ENCODE measurements at regions of chr20 and their contacts with region 1.

Region 1: DNA sequence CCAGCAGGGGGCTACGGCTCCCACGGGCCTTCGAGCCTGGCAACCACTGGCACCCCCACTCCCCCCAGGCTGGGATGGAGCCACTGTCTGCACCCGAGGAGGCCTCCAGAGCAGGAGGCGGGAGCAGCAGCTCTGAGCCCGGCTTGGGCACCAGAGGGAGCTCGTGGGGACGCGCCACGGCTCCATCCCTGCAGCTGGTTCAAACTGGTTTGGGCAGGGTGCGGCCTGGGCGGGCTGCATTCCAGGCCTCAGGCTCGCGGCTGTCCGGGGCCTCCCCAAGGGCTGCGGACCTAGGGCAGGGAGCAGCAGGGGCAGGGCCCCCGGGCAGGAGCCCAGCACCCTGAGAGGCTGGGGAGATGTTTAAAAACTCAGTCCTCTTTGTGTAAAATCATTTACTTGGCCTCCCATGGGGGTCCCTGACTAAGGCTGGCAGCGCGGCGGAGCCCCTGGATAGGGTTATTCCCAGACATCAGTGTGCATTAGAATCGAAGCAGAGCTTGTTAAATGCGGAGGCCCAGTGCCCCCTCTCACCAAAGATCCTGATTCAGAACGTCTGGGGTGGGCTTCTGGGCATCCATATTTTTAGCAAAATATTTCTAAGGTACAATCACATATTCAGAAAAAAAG is 4.1 kb upstream of the BCAS4 start:
- DNase-seq: peak; percentile 93
- ATAC-seq: peak; percentile 86
- H3K4me3 Mint-ChIP-seq: no peak overlapping the region
- H3K27ac Mint-ChIP-seq: peak overlapping the region; percentile 75
- H3K4me1 Mint-ChIP-seq: peaks cover 12% of the 10 kb centered on the region
- H3K27me3 Mint-ChIP-seq: no peaks in the 10 kb centered on the region

Region 2: DNA sequence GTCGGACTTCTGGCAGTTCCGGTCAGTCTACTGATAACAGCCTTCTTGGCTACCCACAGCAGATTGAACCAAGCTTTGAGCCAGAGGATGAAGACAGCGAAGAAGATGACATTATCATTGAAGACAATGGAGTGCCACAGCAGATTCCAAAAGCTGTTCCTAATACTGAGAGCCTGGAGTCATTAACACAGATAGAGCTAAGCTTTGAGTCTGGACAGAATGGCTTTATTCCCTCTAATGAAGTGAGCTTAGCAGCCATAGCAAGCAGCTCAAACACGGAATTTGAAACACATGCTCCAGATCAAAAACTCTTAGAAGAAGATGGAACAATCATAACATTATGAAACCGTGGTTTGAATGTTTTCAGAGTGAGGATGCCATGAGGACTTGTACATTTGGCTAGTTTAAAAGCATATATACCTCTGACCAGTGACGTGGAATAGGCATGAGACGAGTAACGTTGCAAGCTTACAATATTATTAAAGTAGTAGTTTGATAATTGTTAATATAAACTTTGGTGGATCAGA is 40.6 kb before region 1 on chr20:
- CTCF ChIA-PET with region 1: interaction called, 20 read pairs
- POLR2A ChIA-PET with region 1: no interaction called
- intact Hi-C with region 1: no loop called
- DNase-seq: no peak
- ATAC-seq: no peak
- H3K4me3 Mint-ChIP-seq: no peak overlapping the region
- H3K27ac Mint-ChIP-seq: no peak overlapping the region
- H3K4me1 Mint-ChIP-seq: peaks cover 29% of the 10 kb centered on the region
- H3K27me3 Mint-ChIP-seq: no peaks in the 10 kb centered on the region

Region 3: DNA sequence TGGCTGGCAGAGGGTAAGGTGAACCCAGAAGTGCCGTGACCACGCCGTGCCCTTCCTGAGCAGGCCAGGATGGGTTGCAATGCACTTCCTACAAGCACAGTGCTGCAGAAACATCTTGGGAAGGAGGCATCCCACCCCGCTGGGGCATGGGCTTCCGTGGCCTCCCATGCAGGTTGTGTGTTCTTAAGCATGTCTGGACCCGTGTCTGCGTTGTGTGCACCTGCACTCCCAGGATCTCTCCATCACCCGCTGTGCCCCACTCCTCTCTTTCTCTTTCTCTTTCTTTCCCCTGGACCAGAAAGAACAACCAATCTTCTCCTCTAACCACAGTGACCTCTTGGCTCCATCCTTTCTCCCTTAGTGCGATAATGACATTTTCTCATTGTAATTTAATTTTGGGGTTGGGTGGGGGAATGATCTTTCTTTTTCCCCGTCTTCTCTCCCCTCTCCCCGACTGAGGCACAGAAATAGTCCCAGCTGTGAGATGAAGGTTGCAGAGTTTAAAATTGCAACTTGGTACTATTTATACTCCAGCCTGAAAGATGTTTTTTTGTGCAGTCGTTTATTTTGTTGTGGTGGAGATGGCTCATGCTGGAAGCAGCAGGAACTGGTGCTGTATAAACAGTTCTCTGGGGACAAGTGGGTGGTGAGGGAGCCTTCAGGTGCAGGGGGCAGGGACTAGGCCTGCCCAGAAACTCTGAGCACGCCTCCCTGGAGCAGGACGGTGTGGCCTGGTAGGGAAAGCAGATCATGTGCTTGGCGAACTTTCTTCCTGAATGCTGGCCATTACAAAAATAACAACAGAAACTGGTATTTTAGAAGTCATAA is 24.6 kb after region 1 on chr20:
- CTCF ChIA-PET with region 1: interaction called, 19 read pairs
- POLR2A ChIA-PET with region 1: interaction called, 3 read pairs
- intact Hi-C with region 1: loop called (anchors 1 kb)
- DNase-seq: peak; percentile 57
- ATAC-seq: peak; percentile 60
- H3K4me3 Mint-ChIP-seq: peak overlapping the region; percentile 60
- H3K27ac Mint-ChIP-seq: peak overlapping the region; percentile 71
- H3K4me1 Mint-ChIP-seq: peaks cover 28% of the 10 kb centered on the region
- H3K27me3 Mint-ChIP-seq: no peaks in the 10 kb centered on the region

Region 4: GRCh38 chr20:50913690-50914375 is 123.1 kb after region 1 on chr20:
- CTCF ChIA-PET with region 1: interaction called, 6 read pairs
- POLR2A ChIA-PET with region 1: interaction called, 4 read pairs
- intact Hi-C with region 1: loop called (anchors 5 kb)
- DNase-seq: peak; percentile 59
- ATAC-seq: peak; percentile 94
- H3K4me3 Mint-ChIP-seq: no peak overlapping the region
- H3K27ac Mint-ChIP-seq: peak overlapping the region; percentile 81
- H3K4me1 Mint-ChIP-seq: peaks cover 82% of the 10 kb centered on the region
- H3K27me3 Mint-ChIP-seq: no peaks in the 10 kb centered on the region

Region 5: GRCh38 chr20:50958615-50959542 is 168.1 kb after region 1 on chr20 and contains the start of gene MOCS3:
- CTCF ChIA-PET with region 1: interaction called, 15 read pairs
- POLR2A ChIA-PET with region 1: interaction called, 14 read pairs
- intact Hi-C with region 1: loop called (anchors 1 kb)
- DNase-seq: peak; percentile 89
- ATAC-seq: peak; percentile 82
- H3K4me3 Mint-ChIP-seq: peak within 1 kb of the TSS; percentile 99
- H3K27ac Mint-ChIP-seq: peak within 1 kb of the TSS; percentile 99
- H3K4me1 Mint-ChIP-seq: peaks cover 47% of the 10 kb centered on the region
- H3K27me3 Mint-ChIP-seq: no peaks in the 10 kb centered on the region
- total RNA-seq, gene MOCS3: 3.1 to 3.8 TPM

Region 6: GRCh38 chr20:51306503-51307358 is 516.0 kb after region 1 on chr20:
- CTCF ChIA-PET with region 1: no interaction called
- POLR2A ChIA-PET with region 1: no interaction called
- intact Hi-C with region 1: loop called (anchors 1 to 5 kb)
- DNase-seq: peak; percentile 88
- ATAC-seq: peak; percentile 99
- H3K4me3 Mint-ChIP-seq: no peak overlapping the region
- H3K27ac Mint-ChIP-seq: no peak overlapping the region
- H3K4me1 Mint-ChIP-seq: no peaks in the 10 kb centered on the region
- H3K27me3 Mint-ChIP-seq: peaks cover 10% of the 10 kb centered on the region

Measured in activated CD4-positive, alpha-beta T cell treated with anti-CD3 and anti-CD28 coated beads for 36 hours (primary cell).